ENCODE measurements at regions of chr4 and their contacts with region 1.

Region 1: GRCh38 chr4:39834269-39834668 is 136.3 kb downstream of the UBE2K start:
- DNase-seq: no peak
- ATAC-seq: no peak
- H3K4me3 ChIP-seq: no peak overlapping the region
- H3K27ac ChIP-seq: no peak overlapping the region
- H3K4me1 ChIP-seq: no peaks in the 10 kb centered on the region
- H3K27me3 ChIP-seq: no peaks in the 10 kb centered on the region
- CTCF ChIP-seq: no peak

Region 2: DNA sequence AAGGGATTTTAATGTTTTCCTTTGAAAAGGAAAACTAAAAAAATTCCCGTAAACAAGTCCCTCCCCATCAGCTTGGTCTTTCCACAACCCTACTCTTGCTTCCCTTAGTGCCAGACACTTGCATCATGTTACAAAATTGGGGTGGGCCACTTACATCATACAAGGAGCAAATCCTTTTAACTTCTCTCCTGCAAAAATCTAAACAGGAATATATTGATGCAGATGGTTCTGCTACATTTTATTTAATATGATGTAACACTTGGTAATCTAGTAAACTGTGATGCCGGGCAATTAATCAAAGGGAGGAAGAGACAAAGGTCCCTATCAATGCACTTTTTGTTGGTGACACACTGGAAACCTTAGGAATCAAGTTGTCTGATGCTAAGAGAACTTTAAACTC is 11.1 kb before region 1 on chr4:
- CTCF ChIA-PET with region 1: interaction called, 11 read pairs
- POLR2A ChIA-PET with region 1: no interaction called
- in situ Hi-C with region 1: no loop called
- intact Hi-C with region 1: no loop called
- DNase-seq: no peak
- ATAC-seq: no peak
- H3K4me3 ChIP-seq: no peak overlapping the region
- H3K27ac ChIP-seq: peak overlapping the region; percentile 72; the same call in 1 of the 2 replicates
- H3K4me1 ChIP-seq: peaks cover 16% of the 10 kb centered on the region
- H3K27me3 ChIP-seq: no peaks in the 10 kb centered on the region
- CTCF ChIP-seq: no peak

Measured in Panc1 (cell line).